Activated CD4-positive, alpha-beta memory T cell treated with anti-CD3 and anti-CD28 coated beads for 36 hours (primary cell): ENCODE measurements at regions of chr15 and their contacts with region 1.

Region 1: GRCh38 chr15:60255390-60255789 is 142.4 kb downstream of the ANXA2 start:
- DNase-seq: peak; percentile 60
- H3K4me3 Mint-ChIP-seq: no peak overlapping the region
- H3K27ac Mint-ChIP-seq: no peak overlapping the region
- H3K4me1 Mint-ChIP-seq: peaks cover 3% of the 10 kb centered on the region
- H3K27me3 Mint-ChIP-seq: peaks cover 30% of the 10 kb centered on the region

Region 2: DNA sequence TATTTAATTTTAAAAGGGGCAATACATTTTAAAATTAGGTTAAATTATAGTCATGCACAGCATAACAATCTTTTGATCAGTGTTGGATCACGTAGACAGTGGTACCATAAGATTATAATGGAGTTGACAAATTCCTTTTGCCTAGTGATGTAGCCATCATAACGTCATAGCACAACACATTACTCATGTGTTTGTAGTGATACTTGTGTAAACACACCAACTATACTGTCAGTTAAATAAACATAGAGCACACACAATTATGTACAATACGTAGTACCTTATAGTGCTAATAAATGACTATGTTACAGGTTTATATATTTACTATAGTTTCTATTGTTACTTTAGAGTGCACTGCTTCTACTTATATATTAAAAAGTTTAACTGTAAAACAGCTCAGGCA is 220.0 kb before region 1 on chr15:
- CTCF ChIA-PET with region 1: no interaction called
- POLR2A ChIA-PET with region 1: no interaction called
- intact Hi-C with region 1: no loop called
- DNase-seq: no peak
- H3K4me3 Mint-ChIP-seq: no peak overlapping the region
- H3K27ac Mint-ChIP-seq: no peak overlapping the region
- H3K4me1 Mint-ChIP-seq: peaks cover 5% of the 10 kb centered on the region
- H3K27me3 Mint-ChIP-seq: peaks cover 4% of the 10 kb centered on the region

Region 3: DNA sequence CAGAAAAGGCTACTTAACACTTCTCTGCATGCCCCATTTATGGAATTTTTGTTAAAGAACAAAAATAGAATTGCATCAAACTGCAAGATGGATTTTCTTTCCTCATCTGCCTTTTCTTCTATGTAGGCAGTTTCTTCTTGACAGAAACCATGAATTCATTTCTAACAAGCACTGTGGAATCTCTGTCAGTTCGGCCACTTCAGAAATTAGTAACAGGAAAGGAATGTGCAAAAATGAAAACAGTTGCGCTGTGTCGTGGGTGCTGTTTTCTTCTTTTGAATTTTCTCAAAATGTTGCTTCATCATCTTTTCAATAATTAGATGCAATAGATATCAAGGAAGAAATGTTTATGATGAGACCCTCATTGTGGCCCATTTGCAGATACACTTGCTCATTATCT is 99.7 kb before region 1 on chr15:
- CTCF ChIA-PET with region 1: no interaction called
- POLR2A ChIA-PET with region 1: no interaction called
- intact Hi-C with region 1: loop called (anchors 1 kb)
- DNase-seq: peak; percentile 42
- H3K4me3 Mint-ChIP-seq: no peak overlapping the region
- H3K27ac Mint-ChIP-seq: no peak overlapping the region
- H3K4me1 Mint-ChIP-seq: peaks cover 21% of the 10 kb centered on the region
- H3K27me3 Mint-ChIP-seq: peaks cover 21% of the 10 kb centered on the region

Region 4: DNA sequence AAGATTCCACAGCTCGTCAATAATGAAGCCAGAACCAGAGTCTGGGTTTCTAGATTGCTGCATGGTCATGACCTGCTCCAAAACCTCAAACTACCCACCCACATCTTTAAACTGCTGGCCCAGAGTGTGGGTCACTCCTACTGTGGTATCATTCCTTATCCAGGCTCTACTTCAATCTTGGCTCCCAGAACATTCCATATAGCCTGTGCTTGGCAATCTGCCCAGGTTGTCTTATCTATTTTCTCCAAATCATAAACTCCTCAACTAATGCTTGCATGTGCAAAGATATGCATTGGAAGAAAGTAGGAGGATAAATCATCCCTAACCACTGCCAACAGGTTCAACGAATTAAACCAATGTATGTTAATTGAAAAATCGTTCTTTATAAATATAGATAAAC is 27.3 kb before region 1 on chr15:
- CTCF ChIA-PET with region 1: no interaction called
- POLR2A ChIA-PET with region 1: no interaction called
- intact Hi-C with region 1: no loop called
- DNase-seq: no peak
- H3K4me3 Mint-ChIP-seq: no peak overlapping the region
- H3K27ac Mint-ChIP-seq: no peak overlapping the region
- H3K4me1 Mint-ChIP-seq: peaks cover 2% of the 10 kb centered on the region
- H3K27me3 Mint-ChIP-seq: peaks cover 5% of the 10 kb centered on the region

Region 5: GRCh38 chr15:60423537-60423936 is 168.1 kb after region 1 on chr15:
- CTCF ChIA-PET with region 1: no interaction called
- POLR2A ChIA-PET with region 1: no interaction called
- intact Hi-C with region 1: no loop called
- DNase-seq: peak; percentile 17
- H3K4me3 Mint-ChIP-seq: no peak overlapping the region
- H3K27ac Mint-ChIP-seq: no peak overlapping the region
- H3K4me1 Mint-ChIP-seq: peaks cover 19% of the 10 kb centered on the region
- H3K27me3 Mint-ChIP-seq: no peaks in the 10 kb centered on the region